ENCODE measurements at regions of chr6 and their contacts with region 1.

Region 1: DNA sequence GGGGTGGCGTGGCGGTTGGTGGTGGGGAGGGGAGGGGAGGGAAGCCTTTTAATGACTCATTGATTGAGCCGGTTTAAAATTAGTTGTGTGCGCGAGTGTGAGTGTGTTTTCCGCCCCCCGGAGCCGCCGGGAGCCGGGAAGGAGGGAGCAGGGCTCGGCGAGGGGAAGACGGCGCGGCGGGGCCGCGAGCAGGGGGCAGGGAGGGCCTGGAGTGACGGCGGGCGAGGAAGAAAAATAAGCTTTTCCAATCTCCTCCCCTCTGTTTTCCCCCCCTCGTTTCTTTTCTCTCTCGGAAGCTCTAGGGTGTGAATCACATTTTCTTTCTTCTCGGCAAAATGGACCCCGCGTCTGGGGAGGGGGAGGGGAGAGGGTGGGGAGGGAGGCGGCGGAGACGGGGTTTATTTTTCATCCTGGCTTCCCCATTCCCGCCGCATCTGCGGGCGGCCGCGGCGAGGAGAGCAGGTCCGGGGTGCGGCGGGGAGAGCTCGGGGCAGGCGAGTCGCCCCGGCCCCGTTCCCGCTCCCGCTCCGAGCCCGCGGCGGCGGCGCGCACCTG is 847 bp downstream of the BICRAL start:
- DNase-seq: peak; percentile 64 to 89
- ATAC-seq: peak; percentile 51 to 69 (median 60)
- H3K4me3 ChIP-seq: peak overlapping the region; percentile 89
- H3K4me3 Mint-ChIP-seq: peak overlapping the region; percentile 95
- H3K27ac ChIP-seq: peak overlapping the region; percentile 100
- H3K27ac Mint-ChIP-seq: no peak overlapping the region
- H3K4me1 ChIP-seq: peaks cover 22% of the 10 kb centered on the region
- H3K4me1 Mint-ChIP-seq: peaks cover 6 to 14% of the 10 kb centered on the region in 2 donors
- H3K27me3 ChIP-seq: no peaks in the 10 kb centered on the region
- H3K27me3 Mint-ChIP-seq: no peaks in the 10 kb centered on the region
- CTCF ChIP-seq: no peak

Region 2: GRCh38 chr6:42175860-42176259 is 606.8 kb before region 1 on chr6:
- intact Hi-C with region 1: no loop called
- DNase-seq: peak in 1 of 2 donors; percentile 12
- ATAC-seq: no peak
- H3K4me3 ChIP-seq: no peak overlapping the region
- H3K4me3 Mint-ChIP-seq: no peak overlapping the region
- H3K27ac ChIP-seq: no peak overlapping the region
- H3K27ac Mint-ChIP-seq: no peak overlapping the region
- H3K4me1 ChIP-seq: peaks cover 7% of the 10 kb centered on the region
- H3K4me1 Mint-ChIP-seq: peaks cover 0 to 5% of the 10 kb centered on the region in 2 donors
- H3K27me3 ChIP-seq: no peaks in the 10 kb centered on the region
- H3K27me3 Mint-ChIP-seq: peaks cover 7 to 9% of the 10 kb centered on the region in 2 donors
- CTCF ChIP-seq: no peak

Region 3: DNA sequence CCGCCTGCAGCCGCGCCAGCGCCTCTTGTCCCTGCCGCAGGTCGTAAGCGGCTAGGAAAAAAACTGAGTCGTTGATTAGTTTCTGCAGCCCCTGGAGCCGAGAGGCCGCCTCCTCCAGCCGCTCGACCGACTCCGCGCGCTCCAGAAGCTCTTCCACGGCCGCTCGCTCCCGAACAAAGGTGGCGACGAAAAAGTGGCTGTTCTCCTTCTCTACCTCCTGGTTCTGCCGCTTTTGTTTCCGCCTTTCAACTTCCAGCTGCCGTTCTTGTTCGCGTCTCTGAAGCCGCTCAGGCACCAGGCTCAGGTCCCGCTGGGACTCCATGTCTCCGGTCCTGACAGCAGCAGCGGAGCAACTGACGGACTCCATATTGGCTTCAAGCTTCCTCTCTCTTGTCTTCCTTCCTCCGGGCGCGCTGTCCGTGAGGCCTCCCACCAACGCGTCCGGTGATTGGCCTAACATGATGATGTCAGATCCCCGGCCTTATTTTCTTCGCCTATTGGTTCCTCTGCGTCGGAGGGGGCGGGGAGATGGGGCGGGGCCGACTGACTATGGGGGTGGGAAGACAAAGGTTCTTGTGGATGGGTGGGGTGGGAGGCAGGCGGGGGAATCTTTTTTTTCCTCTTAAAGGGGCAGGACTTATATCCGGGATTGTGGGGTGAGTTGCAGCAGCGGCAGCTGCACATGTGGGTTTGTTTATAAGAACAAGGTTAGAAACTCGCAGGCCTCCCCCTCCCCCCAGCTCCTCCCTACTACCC is 36.8 kb before region 1 on chr6 and contains the start of gene TBCC:
- intact Hi-C with region 1: loop called (anchors 1 kb)
- DNase-seq: peak; percentile 86 to 98
- ATAC-seq: peak; percentile 83 to 92 (median 85)
- H3K4me3 ChIP-seq: peak within 1 kb of the TSS; percentile 98
- H3K4me3 Mint-ChIP-seq: peak within 1 kb of the TSS; percentile 100
- H3K27ac ChIP-seq: peak within 1 kb of the TSS; percentile 95
- H3K27ac Mint-ChIP-seq: peak within 1 kb of the TSS; percentile 98 to 100
- H3K4me1 ChIP-seq: peaks cover 38% of the 10 kb centered on the region
- H3K4me1 Mint-ChIP-seq: peaks cover 22 to 23% of the 10 kb centered on the region in 2 donors
- H3K27me3 ChIP-seq: no peaks in the 10 kb centered on the region
- H3K27me3 Mint-ChIP-seq: no peaks in the 10 kb centered on the region
- CTCF ChIP-seq: no peak
- total RNA-seq, gene TBCC: 64.1 to 77.6 (median 65.6) TPM

Region 4: DNA sequence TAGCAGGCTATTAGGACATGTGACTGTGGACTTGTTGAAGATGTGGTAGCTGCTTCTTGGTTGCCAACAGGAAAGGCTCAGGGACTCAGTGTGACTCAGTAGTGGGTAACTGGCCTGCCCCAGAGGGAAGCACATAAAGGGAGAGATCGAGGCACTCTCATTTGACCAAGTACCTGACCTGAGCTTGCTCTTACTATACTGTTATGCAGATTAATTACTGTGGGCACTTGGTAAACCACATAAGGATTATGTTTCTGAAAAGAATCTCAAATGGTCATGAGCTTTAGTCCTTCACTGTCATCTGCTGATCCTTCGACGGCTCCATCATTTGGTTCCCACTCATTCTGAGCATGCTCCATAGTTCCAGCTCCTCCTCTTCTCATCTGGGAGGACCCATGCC is 48.5 kb after region 1 on chr6:
- intact Hi-C with region 1: no loop called
- DNase-seq: no peak
- ATAC-seq: no peak
- H3K4me3 ChIP-seq: no peak overlapping the region
- H3K4me3 Mint-ChIP-seq: no peak overlapping the region
- H3K27ac ChIP-seq: no peak overlapping the region
- H3K27ac Mint-ChIP-seq: peak overlapping the region; percentile 25 to 60
- H3K4me1 ChIP-seq: no peaks in the 10 kb centered on the region
- H3K4me1 Mint-ChIP-seq: peaks cover 7 to 9% of the 10 kb centered on the region in 2 donors
- H3K27me3 ChIP-seq: no peaks in the 10 kb centered on the region
- H3K27me3 Mint-ChIP-seq: no peaks in the 10 kb centered on the region
- CTCF ChIP-seq: no peak

Region 5: DNA sequence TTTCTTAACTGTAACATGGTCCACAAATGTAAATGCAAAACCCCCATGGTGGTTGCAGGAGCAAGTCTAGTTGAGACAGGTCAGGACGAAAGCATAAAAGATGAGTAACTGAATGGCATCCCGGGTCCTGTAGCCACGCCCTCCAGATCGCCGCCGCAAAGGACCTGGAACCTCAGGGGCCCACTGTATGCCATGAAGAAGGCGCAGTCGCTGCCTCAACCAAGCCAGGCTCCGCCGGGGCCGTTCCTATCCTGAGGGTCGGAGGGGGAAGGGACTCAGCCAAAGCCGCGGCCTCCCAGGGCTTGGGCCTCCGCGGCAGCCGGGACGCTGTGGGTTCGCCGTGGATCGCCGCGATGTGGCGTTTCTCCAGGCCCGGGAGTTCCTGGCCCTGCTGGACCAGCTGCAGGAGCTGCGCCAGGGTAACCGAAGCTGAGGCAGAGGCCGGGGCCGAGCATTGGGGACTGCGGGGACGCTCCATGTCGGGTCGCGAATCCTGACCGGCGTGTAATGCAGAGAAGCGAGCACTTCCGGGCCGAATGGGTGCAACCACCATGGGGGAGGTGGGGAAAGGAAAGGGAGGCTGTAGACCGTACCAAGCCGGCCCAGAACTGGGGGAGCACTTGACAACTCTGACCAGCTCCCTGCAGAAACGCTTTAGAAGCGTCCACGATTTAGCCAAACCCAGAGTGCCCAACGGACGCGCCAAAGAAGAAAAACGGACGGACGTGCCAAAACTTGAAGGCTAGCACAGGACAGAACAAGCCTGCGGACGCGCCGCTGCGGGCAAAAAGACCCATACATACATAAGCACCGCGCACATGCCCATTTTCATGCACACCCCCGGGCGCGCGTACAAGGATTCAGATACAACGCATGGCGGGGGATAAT is 107.9 kb after region 1 on chr6:
- intact Hi-C with region 1: loop called (anchors 5 kb)
- DNase-seq: peak; percentile 82 to 93
- ATAC-seq: peak; percentile 97 to 99 (median 98)
- H3K4me3 ChIP-seq: peak overlapping the region; percentile 98
- H3K4me3 Mint-ChIP-seq: peak overlapping the region; percentile 97
- H3K27ac ChIP-seq: peak overlapping the region; percentile 89
- H3K27ac Mint-ChIP-seq: peak overlapping the region; percentile 91 to 97
- H3K4me1 ChIP-seq: peaks cover 13% of the 10 kb centered on the region
- H3K4me1 Mint-ChIP-seq: peaks cover 7 to 8% of the 10 kb centered on the region in 2 donors
- H3K27me3 ChIP-seq: no peaks in the 10 kb centered on the region
- H3K27me3 Mint-ChIP-seq: no peaks in the 10 kb centered on the region
- CTCF ChIP-seq: no peak

Region 6: DNA sequence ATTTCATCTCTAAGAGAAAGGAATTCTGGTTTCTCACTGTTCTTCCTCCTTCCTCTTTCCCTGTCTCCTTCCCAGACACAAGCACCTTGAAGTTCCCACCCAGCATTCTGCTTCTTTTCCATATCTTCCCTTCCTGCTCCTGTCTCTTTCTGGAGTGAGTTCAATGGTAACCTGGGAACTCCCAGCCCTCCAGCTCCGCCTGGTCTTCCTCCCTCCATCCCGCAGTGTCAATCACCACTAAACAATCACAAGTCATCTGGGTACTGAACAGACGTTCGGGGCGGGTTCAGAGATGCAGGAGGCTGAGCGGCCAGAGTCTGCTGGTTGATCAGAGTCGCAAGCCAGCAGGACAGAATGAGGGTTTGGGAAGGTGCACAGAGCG is 468.3 kb after region 1 on chr6:
- intact Hi-C with region 1: no loop called
- DNase-seq: no peak
- ATAC-seq: no peak
- H3K4me3 ChIP-seq: no peak overlapping the region
- H3K4me3 Mint-ChIP-seq: no peak overlapping the region
- H3K27ac ChIP-seq: no peak overlapping the region
- H3K27ac Mint-ChIP-seq: no peak overlapping the region
- H3K4me1 ChIP-seq: peaks cover 19% of the 10 kb centered on the region
- H3K4me1 Mint-ChIP-seq: peaks cover 9 to 13% of the 10 kb centered on the region in 2 donors
- H3K27me3 ChIP-seq: peaks cover 2% of the 10 kb centered on the region
- H3K27me3 Mint-ChIP-seq: peaks cover 23 to 28% of the 10 kb centered on the region in 2 donors
- CTCF ChIP-seq: no peak